ENCODE measurements at regions of chr17 and their contacts with region 1.

Region 1: GRCh38 chr17:76121932-76122430 is 18.4 kb upstream of the EXOC7 start:
- DNase-seq: no peak
- H3K4me3 ChIP-seq: peak overlapping the region; percentile 18 to 73 (median 21)
- H3K4me3 Mint-ChIP-seq: peak overlapping the region; percentile 9 to 53
- H3K27ac ChIP-seq: no peak overlapping the region
- H3K27ac Mint-ChIP-seq: peak overlapping the region in 1 of 7 donors; percentile 75
- H3K4me1 ChIP-seq: peaks cover 10 to 20% of the 10 kb centered on the region in 2 donors
- H3K4me1 Mint-ChIP-seq: peaks cover 11% of the 10 kb centered on the region
- H3K27me3 ChIP-seq: no peaks in the 10 kb centered on the region
- H3K27me3 Mint-ChIP-seq: peaks cover 8 to 27% (median 16%) of the 10 kb centered on the region in 3 donors
- CTCF ChIP-seq: no peak

Region 2: GRCh38 chr17:76182016-76182764 is 60.2 kb after region 1 on chr17:
- intact Hi-C with region 1: loop called (anchors 5 to 10 kb)
- DNase-seq: peak; percentile 81 to 88 (median 88)
- H3K4me3 ChIP-seq: no peak overlapping the region
- H3K4me3 Mint-ChIP-seq: peak overlapping the region; percentile 41 to 63
- H3K27ac ChIP-seq: no peak overlapping the region
- H3K27ac Mint-ChIP-seq: peak overlapping the region in 1 of 7 donors; percentile 57
- H3K4me1 ChIP-seq: peaks cover 0 to 7% of the 10 kb centered on the region in 2 donors
- H3K4me1 Mint-ChIP-seq: peaks cover 10% of the 10 kb centered on the region
- H3K27me3 ChIP-seq: no peaks in the 10 kb centered on the region
- H3K27me3 Mint-ChIP-seq: peaks cover 0 to 6% (median under 1%) of the 10 kb centered on the region in 3 donors
- CTCF ChIP-seq: peak; percentile 87

Region 3: GRCh38 chr17:76278952-76279741 is 157.2 kb after region 1 on chr17:
- intact Hi-C with region 1: loop called (anchors 1 to 2 kb)
- DNase-seq: peak; percentile 72 to 80 (median 79)
- H3K4me3 ChIP-seq: no peak overlapping the region
- H3K4me3 Mint-ChIP-seq: no peak overlapping the region
- H3K27ac ChIP-seq: no peak overlapping the region
- H3K27ac Mint-ChIP-seq: peak overlapping the region in 1 of 7 donors; percentile 82
- H3K4me1 ChIP-seq: peaks cover 0 to 1% of the 10 kb centered on the region in 2 donors
- H3K4me1 Mint-ChIP-seq: peaks cover 5% of the 10 kb centered on the region
- H3K27me3 ChIP-seq: no peaks in the 10 kb centered on the region
- H3K27me3 Mint-ChIP-seq: peaks cover 2 to 5% (median 5%) of the 10 kb centered on the region in 3 donors
- CTCF ChIP-seq: peak; percentile 99

Region 4: DNA sequence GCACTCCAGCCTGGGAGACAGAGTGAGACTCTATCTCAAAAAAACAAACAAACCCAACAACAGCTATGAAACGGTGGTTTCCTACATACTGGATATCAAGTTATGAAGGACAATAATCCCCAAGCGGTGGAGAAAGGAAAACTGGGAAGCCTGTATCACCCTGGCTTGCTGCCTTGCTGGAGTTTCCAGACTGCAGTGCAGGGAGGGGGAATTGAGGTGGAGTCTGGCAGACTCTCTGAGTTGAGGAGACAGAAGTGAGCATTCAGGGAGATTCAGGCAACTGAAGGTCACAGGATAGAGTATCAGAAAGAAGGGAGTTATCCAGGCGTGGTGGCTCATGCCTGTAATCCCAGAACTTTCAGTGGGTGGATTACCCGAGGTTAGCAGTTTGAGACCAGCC is 174.2 kb after region 1 on chr17:
- intact Hi-C with region 1: loop called in 1 of 2 experiments (anchors 5 kb)
- DNase-seq: no peak
- H3K4me3 ChIP-seq: no peak overlapping the region
- H3K4me3 Mint-ChIP-seq: no peak overlapping the region
- H3K27ac ChIP-seq: no peak overlapping the region
- H3K27ac Mint-ChIP-seq: no peak overlapping the region
- H3K4me1 ChIP-seq: no peaks in the 10 kb centered on the region
- H3K4me1 Mint-ChIP-seq: peaks cover 1% of the 10 kb centered on the region
- H3K27me3 ChIP-seq: no peaks in the 10 kb centered on the region
- H3K27me3 Mint-ChIP-seq: peaks cover 0 to 5% (median 2%) of the 10 kb centered on the region in 3 donors
- CTCF ChIP-seq: no peak

Region 5: GRCh38 chr17:76408052-76408849 is 286.3 kb after region 1 on chr17:
- intact Hi-C with region 1: loop called in 1 of 2 experiments (anchors 10 kb)
- DNase-seq: peak; percentile 26 to 50 (median 34)
- H3K4me3 ChIP-seq: no peak overlapping the region
- H3K4me3 Mint-ChIP-seq: no peak overlapping the region
- H3K27ac ChIP-seq: no peak overlapping the region
- H3K27ac Mint-ChIP-seq: no peak overlapping the region
- H3K4me1 ChIP-seq: peaks cover 16 to 22% of the 10 kb centered on the region in 2 donors
- H3K4me1 Mint-ChIP-seq: peaks cover 34% of the 10 kb centered on the region
- H3K27me3 ChIP-seq: no peaks in the 10 kb centered on the region
- H3K27me3 Mint-ChIP-seq: peaks cover 3 to 5% (median 4%) of the 10 kb centered on the region in 3 donors
- CTCF ChIP-seq: peak; percentile 57